Activated B cell treated with CpG ODN at 0.5 μM for 24 hours (primary cell): ENCODE measurements at regions of chr3 and their contacts with region 1.

Region 1: GRCh38 chr3:113606539-113607218 is 74.3 kb downstream of the SIDT1 start:
- DNase-seq: peak; percentile 26
- ATAC-seq: peak; percentile 96
- H3K4me3 Mint-ChIP-seq: peak overlapping the region; percentile 52
- H3K27ac Mint-ChIP-seq: peak overlapping the region; percentile 72
- H3K4me1 Mint-ChIP-seq: peaks cover 25% of the 10 kb centered on the region
- H3K27me3 Mint-ChIP-seq: no peaks in the 10 kb centered on the region
- CTCF ChIP-seq: no peak

Region 2: GRCh38 chr3:113696658-113697499 is 90.2 kb after region 1 on chr3:
- CTCF ChIA-PET with region 1: no interaction called
- POLR2A ChIA-PET with region 1: interaction called, 6 read pairs
- intact Hi-C with region 1: loop called (anchors 1 kb)
- DNase-seq: peak; percentile 95
- ATAC-seq: peak; percentile 89
- H3K4me3 Mint-ChIP-seq: no peak overlapping the region
- H3K27ac Mint-ChIP-seq: no peak overlapping the region
- H3K4me1 Mint-ChIP-seq: peaks cover 29% of the 10 kb centered on the region
- H3K27me3 Mint-ChIP-seq: no peaks in the 10 kb centered on the region
- CTCF ChIP-seq: no peak